CD4-positive, alpha-beta memory T cell (primary cell): ENCODE measurements at regions of chr7 and their contacts with region 1.

Region 1: DNA sequence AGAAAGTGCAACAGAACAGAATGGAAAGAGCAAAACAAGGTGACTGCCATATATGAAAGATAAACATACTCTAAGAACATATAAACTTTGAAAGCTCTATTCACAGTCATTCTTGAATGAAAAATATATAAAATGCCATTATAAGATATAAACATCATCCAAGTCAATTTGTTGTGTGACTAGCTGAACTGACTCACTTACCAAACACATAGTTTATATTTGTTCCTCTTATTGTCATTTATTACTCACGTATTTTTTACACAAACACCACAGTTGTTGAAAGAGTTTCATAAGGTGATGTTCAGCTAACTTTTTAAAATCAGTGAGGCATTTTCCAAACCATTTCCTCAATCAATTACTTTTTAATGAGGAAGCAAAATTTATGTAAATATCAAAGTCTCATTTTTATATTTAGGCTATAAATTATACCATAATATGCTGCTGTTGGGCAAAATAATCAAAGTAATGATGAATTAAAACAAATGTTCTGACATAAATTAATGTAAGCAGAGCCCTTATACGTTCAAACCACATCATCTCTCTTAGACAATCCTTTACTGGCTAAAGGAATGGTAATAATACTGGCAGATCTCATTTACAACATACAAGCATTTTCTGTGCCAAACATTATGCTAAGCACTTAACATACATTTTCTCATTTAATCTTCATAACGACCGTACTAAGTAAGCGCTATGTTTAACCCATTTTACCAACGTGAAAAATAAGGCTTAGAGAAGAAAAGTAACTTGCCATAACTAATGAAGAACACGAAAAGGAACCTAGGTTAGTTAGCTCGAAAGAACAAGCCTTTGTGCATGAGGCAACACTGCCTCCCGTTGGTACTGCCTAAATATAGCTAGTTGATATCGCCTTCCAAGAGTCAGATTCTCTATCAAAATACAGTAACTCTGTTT is 7.3 kb downstream of the LRRN3 start:
- DNase-seq: peak; percentile 46 to 59 (median 47)
- H3K4me3 ChIP-seq: no peak overlapping the region
- H3K4me3 Mint-ChIP-seq: peak overlapping the region in 4 of 8 donors; percentile 0 to 43 (median 34)
- H3K27ac ChIP-seq: no peak overlapping the region
- H3K27ac Mint-ChIP-seq: peak overlapping the region in 3 of 7 donors; percentile 13 to 68 (median 29)
- H3K4me1 ChIP-seq: peaks cover 12% of the 10 kb centered on the region
- H3K4me1 Mint-ChIP-seq: peaks cover 4 to 9% (median 8%) of the 10 kb centered on the region in 4 donors
- H3K27me3 ChIP-seq: no peaks in the 10 kb centered on the region
- H3K27me3 Mint-ChIP-seq: no peaks in the 10 kb centered on the region

Region 2: GRCh38 chr7:110590415-110590814 is 507.9 kb before region 1 on chr7:
- CTCF ChIA-PET with region 1: interaction called, 12 read pairs
- POLR2A ChIA-PET with region 1: no interaction called
- intact Hi-C with region 1: loop called (anchors 1 kb)
- DNase-seq: no peak
- H3K4me3 ChIP-seq: no peak overlapping the region
- H3K4me3 Mint-ChIP-seq: no peak overlapping the region
- H3K27ac ChIP-seq: no peak overlapping the region
- H3K27ac Mint-ChIP-seq: no peak overlapping the region
- H3K4me1 ChIP-seq: no peaks in the 10 kb centered on the region
- H3K4me1 Mint-ChIP-seq: peaks cover 0 to 1% (median 0%) of the 10 kb centered on the region in 4 donors
- H3K27me3 ChIP-seq: no peaks in the 10 kb centered on the region
- H3K27me3 Mint-ChIP-seq: no peaks in the 10 kb centered on the region

Region 3: DNA sequence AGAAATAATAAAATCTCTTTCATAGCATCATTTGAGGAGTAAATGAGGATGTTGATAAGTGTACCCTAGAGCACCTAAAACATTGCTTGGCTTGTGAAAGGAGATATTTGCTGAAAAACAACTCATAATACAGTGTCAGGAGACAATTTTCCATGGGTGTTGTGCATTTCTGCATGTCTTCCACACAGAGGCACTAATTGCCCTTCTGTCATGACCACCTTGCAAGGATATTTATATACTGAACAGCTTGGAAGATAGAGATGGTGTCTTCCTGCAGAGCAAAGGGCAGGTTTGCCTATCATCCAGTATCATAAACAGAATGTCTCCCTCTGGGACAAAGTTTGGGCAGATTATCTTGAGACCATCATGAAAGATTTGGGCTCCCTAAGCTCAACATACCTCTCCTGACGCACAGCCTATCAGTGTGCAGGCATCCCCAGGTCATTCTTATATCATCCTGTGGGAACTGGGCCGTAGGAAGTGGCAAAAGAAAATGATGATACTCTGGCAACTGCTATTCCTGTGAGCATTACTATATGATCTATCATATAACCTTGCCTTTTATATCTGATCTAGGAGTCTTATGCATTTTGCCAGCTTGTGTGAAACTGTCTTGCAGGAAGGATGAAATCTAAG is 502.5 kb before region 1 on chr7:
- CTCF ChIA-PET with region 1: interaction called, 12 read pairs
- POLR2A ChIA-PET with region 1: no interaction called
- intact Hi-C with region 1: loop called (anchors 1 kb)
- DNase-seq: no peak
- H3K4me3 ChIP-seq: no peak overlapping the region
- H3K4me3 Mint-ChIP-seq: no peak overlapping the region
- H3K27ac ChIP-seq: no peak overlapping the region
- H3K27ac Mint-ChIP-seq: no peak overlapping the region
- H3K4me1 ChIP-seq: no peaks in the 10 kb centered on the region
- H3K4me1 Mint-ChIP-seq: peaks cover 0 to 1% (median 0%) of the 10 kb centered on the region in 4 donors
- H3K27me3 ChIP-seq: no peaks in the 10 kb centered on the region
- H3K27me3 Mint-ChIP-seq: no peaks in the 10 kb centered on the region

Region 4: DNA sequence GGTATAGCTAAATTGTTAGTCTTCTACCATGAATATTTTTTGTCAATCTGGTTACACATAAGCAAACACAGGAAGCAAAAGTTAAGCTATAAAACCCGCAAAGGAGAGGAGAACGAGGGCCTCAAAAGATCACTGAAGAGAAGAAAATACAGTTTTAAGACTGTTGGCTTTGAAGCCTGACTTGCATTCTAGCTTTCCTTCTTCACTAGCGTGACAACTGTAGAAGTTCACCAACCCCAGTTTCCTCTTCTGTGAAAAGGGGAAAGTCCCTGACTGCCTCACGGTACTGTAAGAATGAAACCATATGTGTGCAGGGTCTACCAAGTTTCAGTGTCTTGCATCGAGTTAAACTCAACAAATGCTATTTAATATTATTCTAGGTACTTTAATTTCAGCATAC is 14.9 kb before region 1 on chr7:
- CTCF ChIA-PET with region 1: interaction called, 15 read pairs
- POLR2A ChIA-PET with region 1: interaction called, 23 read pairs
- intact Hi-C with region 1: no loop called
- DNase-seq: peak; percentile 65 to 79 (median 70)
- H3K4me3 ChIP-seq: no peak overlapping the region
- H3K4me3 Mint-ChIP-seq: peak overlapping the region in 7 of 8 donors; percentile 7 to 82 (median 54)
- H3K27ac ChIP-seq: peak overlapping the region; percentile 13
- H3K27ac Mint-ChIP-seq: peak overlapping the region; percentile 50 to 96 (median 86)
- H3K4me1 ChIP-seq: peaks cover 48% of the 10 kb centered on the region
- H3K4me1 Mint-ChIP-seq: peaks cover 37 to 46% (median 39%) of the 10 kb centered on the region in 4 donors
- H3K27me3 ChIP-seq: no peaks in the 10 kb centered on the region
- H3K27me3 Mint-ChIP-seq: no peaks in the 10 kb centered on the region

Region 5: DNA sequence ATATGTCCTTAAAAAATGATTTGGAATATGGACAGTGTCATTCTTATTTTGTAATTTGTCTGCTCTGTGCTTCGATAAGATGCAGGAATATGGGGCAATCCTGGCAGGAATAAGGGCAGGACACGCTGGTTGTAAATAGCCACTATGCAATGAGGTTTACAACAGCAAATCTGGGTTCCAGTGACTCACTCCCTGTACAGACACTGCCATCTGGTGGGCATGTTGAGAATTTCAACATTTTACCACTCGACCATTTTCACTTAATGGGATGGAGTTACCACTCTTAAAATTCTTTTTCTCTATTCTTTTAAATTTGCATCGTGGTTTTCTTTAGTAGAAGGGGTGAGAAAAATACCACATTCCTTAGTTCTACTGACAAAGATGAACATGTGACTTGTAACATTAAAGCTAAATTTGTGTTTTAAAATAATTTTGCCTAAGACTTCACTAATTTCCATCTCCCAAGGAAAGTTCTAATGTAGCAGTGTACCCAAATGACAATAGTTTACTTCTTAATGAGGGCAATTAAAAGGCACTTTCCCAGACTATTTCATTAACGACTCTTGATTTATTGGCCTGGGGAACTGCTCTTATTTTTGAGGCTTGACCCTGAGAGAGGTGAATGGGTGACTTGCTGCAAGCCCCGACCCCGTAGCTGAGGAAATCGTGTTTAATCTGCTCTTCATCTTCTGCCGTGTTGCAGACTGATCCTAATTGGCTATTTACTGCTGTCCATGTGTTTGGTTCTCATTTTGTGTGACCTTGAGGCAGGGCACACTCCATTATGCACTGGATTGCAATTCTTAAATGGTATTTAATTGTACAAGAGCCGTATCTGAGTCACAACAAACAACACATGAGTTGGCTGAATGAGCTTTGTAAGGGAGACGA is 637.6 kb after region 1 on chr7:
- CTCF ChIA-PET with region 1: interaction called, 6 read pairs
- POLR2A ChIA-PET with region 1: no interaction called
- intact Hi-C with region 1: loop called (anchors 1 kb)
- DNase-seq: peak; percentile 42 to 62 (median 50)
- H3K4me3 ChIP-seq: no peak overlapping the region
- H3K4me3 Mint-ChIP-seq: no peak overlapping the region
- H3K27ac ChIP-seq: no peak overlapping the region
- H3K27ac Mint-ChIP-seq: no peak overlapping the region
- H3K4me1 ChIP-seq: no peaks in the 10 kb centered on the region
- H3K4me1 Mint-ChIP-seq: no peaks in the 10 kb centered on the region
- H3K27me3 ChIP-seq: no peaks in the 10 kb centered on the region
- H3K27me3 Mint-ChIP-seq: peaks cover 7 to 10% of the 10 kb centered on the region in 2 donors